Heart right ventricle (tissue), 16 donors: ENCODE measurements at regions of chr5 and their contacts with region 1.

Region 1: DNA sequence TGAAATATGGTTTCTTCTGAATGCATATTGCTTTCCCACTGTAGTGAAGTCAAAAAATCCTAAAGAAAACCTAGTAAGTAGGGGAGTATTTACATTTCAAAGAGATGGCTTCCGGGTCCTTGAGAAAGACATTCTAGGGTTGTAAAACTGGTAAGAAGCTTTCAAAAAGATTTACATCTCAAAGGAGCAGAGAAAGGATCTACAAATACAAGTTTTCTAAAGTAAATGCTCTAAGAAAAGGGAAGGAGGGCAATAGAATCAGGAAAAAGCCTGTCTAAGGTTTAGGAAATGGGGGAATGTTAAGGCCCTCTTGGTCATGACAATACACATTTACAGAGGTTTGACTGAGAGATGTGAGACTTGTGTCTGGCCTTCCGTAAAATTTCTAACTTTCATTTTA is 16.7 kb upstream of the TRPC7 start:
- DNase-seq: no peak
- ATAC-seq: no peak
- H3K4me3 ChIP-seq: no peak overlapping the region
- H3K27ac ChIP-seq: no peak overlapping the region
- H3K4me1 ChIP-seq: no peaks in the 10 kb centered on the region
- H3K27me3 ChIP-seq: peaks cover 0 to 9% (median 4%) of the 10 kb centered on the region in 7 donors
- CTCF ChIP-seq: no peak

Region 2: DNA sequence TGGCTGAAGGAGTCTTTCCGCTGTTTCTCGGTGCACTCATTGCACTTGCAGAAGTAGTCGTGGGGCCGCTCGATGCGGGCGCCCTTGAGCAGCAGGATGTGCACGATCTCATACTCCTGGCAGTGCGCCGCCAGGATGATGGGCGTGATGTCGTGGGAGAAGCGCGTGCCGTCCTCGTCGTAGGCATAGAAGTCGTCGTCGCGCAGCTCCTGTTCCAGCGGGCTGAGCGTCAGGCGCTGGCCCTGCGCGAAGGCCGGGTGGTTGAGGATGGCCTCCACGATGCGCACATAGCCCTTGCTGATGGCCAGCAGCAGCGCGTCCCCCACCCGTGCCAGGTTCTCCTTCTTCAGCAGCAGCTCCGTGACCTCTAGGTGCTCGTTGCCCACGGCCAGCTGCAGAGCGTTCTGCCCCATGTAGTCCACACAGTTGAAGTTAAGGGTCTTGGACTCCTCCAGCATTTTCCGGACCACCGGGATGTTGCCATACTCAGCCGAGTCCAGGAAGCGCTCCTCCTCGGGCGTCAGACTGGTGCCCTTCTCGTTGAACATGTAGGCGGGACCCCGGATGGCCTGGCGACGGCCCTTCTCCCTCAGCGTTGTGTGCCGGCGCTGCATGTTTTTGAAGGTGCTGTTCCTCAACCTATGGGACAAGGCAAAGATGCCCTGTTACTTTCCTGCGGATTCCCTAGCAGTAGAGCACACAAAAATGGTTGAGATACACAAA is 25.2 kb before region 1 on chr5:
- intact Hi-C with region 1: loop called in 1 of 10 experiments (anchors 1 kb)
- DNase-seq: no peak
- ATAC-seq: no peak
- H3K4me3 ChIP-seq: no peak overlapping the region
- H3K27ac ChIP-seq: no peak overlapping the region
- H3K4me1 ChIP-seq: no peaks in the 10 kb centered on the region
- H3K27me3 ChIP-seq: peaks cover 0 to 4% (median 0%) of the 10 kb centered on the region in 7 donors
- CTCF ChIP-seq: no peak